IMR-90 (cell line): ENCODE measurements at regions of chr5 and their contacts with region 1.

Region 1: GRCh38 chr5:168947212-168947868 is 353.6 kb downstream of the SLIT3 start:
- DNase-seq: peak; percentile 13
- ATAC-seq: peak; percentile 87
- H3K4me3 ChIP-seq: no peak overlapping the region
- H3K27ac ChIP-seq: peak overlapping the region; percentile 23; the same call in 1 of the 2 replicates
- H3K4me1 ChIP-seq: no peaks in the 10 kb centered on the region
- H3K27me3 ChIP-seq: no peaks in the 10 kb centered on the region; the same call in 1 of the 2 replicates
- CTCF ChIP-seq: peak; percentile 56
- POLR2A ChIP-seq: no peak
- RAD21 ChIP-seq: peak; percentile 35

Region 2: GRCh38 chr5:168706655-168707069 is 240.7 kb before region 1 on chr5:
- CTCF ChIA-PET with region 1: interaction called, 3 read pairs
- POLR2A ChIA-PET with region 1: no interaction called
- dilution Hi-C with region 1: no loop called
- in situ Hi-C with region 1: no loop called
- intact Hi-C with region 1: loop called (anchors 1 kb)
- DNase-seq: peak; percentile 47
- ATAC-seq: peak; percentile 75
- H3K4me3 ChIP-seq: no peak overlapping the region
- H3K27ac ChIP-seq: no peak overlapping the region
- H3K4me1 ChIP-seq: no peaks in the 10 kb centered on the region
- H3K27me3 ChIP-seq: no peaks in the 10 kb centered on the region
- CTCF ChIP-seq: peak; percentile 64
- POLR2A ChIP-seq: no peak
- RAD21 ChIP-seq: peak; percentile 75

Region 3: GRCh38 chr5:169019871-169020501 is 72.6 kb after region 1 on chr5:
- CTCF ChIA-PET with region 1: no interaction called
- POLR2A ChIA-PET with region 1: no interaction called
- dilution Hi-C with region 1: no loop called
- in situ Hi-C with region 1: no loop called
- intact Hi-C with region 1: no loop called
- DNase-seq: no peak
- ATAC-seq: no peak
- H3K4me3 ChIP-seq: no peak overlapping the region
- H3K27ac ChIP-seq: no peak overlapping the region
- H3K4me1 ChIP-seq: no peaks in the 10 kb centered on the region
- H3K27me3 ChIP-seq: no peaks in the 10 kb centered on the region; the same call in 1 of the 2 replicates
- CTCF ChIP-seq: no peak
- POLR2A ChIP-seq: no peak
- RAD21 ChIP-seq: no peak